ENCODE measurements at regions of chrX and their contacts with region 1.

Region 1: GRCh38 chrX:107716816-107717700 is 58.5 kb downstream of the TSC22D3 start:
- DNase-seq: peak; percentile 75
- CTCF ChIP-seq: no peak

Region 2: GRCh38 chrX:107627838-107628661 is 89.0 kb before region 1 on chrX and contains the start of gene PRPS1:
- CTCF ChIA-PET with region 1: interaction called, 4 read pairs
- POLR2A ChIA-PET with region 1: interaction called, 14 read pairs
- DNase-seq: peak; percentile 89
- CTCF ChIP-seq: no peak

Region 3: GRCh38 chrX:107654872-107655761 is 61.9 kb before region 1 on chrX:
- CTCF ChIA-PET with region 1: interaction called, 126 read pairs
- POLR2A ChIA-PET with region 1: interaction called, 6 read pairs
- DNase-seq: peak; percentile 25
- CTCF ChIP-seq: peak; percentile 77

Region 4: GRCh38 chrX:107701493-107702121 is 15.5 kb before region 1 on chrX:
- CTCF ChIA-PET with region 1: interaction called, 7 read pairs
- POLR2A ChIA-PET with region 1: interaction called, 20 read pairs
- DNase-seq: no peak
- CTCF ChIP-seq: no peak

Region 5: GRCh38 chrX:107729547-107730297 is 12.7 kb after region 1 on chrX:
- CTCF ChIA-PET with region 1: interaction called, 28 read pairs
- POLR2A ChIA-PET with region 1: interaction called, 14 read pairs
- DNase-seq: peak; percentile 39
- CTCF ChIP-seq: no peak

Region 6: DNA sequence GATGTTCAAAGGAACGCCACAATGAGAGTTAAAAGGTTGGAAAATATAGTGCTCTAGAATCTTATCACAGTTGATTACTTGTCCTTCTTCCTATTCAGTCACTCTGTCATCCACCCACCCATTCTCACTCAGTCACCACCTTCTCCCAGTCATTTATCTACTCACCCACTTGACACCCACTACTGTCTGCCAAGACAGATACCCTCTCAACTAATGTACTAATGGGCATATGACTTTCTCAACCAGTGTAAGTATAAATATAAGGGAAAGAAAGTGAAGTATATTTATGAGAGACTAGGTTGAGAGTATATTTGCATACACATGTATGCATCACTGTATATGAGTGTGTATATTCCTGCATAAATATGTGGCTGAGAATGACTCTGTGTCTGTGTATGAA is 128.6 kb after region 1 on chrX:
- CTCF ChIA-PET with region 1: no interaction called
- POLR2A ChIA-PET with region 1: no interaction called
- DNase-seq: no peak
- CTCF ChIP-seq: no peak

Region 7: GRCh38 chrX:107935664-107936433 is 218.8 kb after region 1 on chrX:
- CTCF ChIA-PET with region 1: no interaction called
- POLR2A ChIA-PET with region 1: no interaction called
- DNase-seq: no peak
- CTCF ChIP-seq: no peak

Region 8: GRCh38 chrX:108245459-108245858 is 528.4 kb after region 1 on chrX:
- CTCF ChIA-PET with region 1: no interaction called
- POLR2A ChIA-PET with region 1: no interaction called
- DNase-seq: no peak
- CTCF ChIP-seq: no peak

Region 9: GRCh38 chrX:108494406-108495090 is 777.5 kb after region 1 on chrX:
- CTCF ChIA-PET with region 1: no interaction called
- POLR2A ChIA-PET with region 1: no interaction called
- DNase-seq: no peak
- CTCF ChIP-seq: no peak

Measured in GM10248 (cell line).